ENCODE measurements at regions of chr5 and their contacts with region 1.

Region 1: GRCh38 chr5:91101600-91102379 is 281.3 kb downstream of the ARRDC3 start:
- DNase-seq: peak; percentile 33
- H3K4me3 Mint-ChIP-seq: no peak overlapping the region
- H3K27ac Mint-ChIP-seq: no peak overlapping the region
- H3K4me1 Mint-ChIP-seq: peaks cover 2% of the 10 kb centered on the region
- H3K27me3 Mint-ChIP-seq: peaks cover 9% of the 10 kb centered on the region

Region 2: DNA sequence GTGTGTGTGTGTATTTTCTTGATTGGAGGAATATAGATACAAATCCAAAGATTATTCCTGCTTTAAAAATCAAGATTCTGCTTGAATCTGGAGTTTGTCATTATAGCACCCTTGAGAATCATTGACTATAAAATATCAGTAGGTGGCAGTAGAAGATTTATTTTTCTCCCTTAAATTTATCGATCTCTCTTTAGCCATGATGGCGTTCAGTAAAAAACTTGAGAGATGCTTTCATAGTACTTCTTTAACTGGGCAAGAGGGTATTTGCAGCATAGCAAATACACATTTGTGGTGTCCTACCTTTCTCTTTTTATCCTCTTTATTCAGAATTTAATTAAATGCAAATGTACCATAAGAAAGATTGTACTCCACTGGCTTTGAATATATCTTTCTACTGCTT is 235.5 kb before region 1 on chr5:
- intact Hi-C with region 1: loop called (anchors 2 kb)
- DNase-seq: no peak
- H3K4me3 Mint-ChIP-seq: no peak overlapping the region
- H3K27ac Mint-ChIP-seq: no peak overlapping the region
- H3K4me1 Mint-ChIP-seq: peaks cover 9% of the 10 kb centered on the region
- H3K27me3 Mint-ChIP-seq: peaks cover 15% of the 10 kb centered on the region

Region 3: GRCh38 chr5:90968319-90968718 is 133.5 kb before region 1 on chr5:
- intact Hi-C with region 1: no loop called
- DNase-seq: no peak
- H3K4me3 Mint-ChIP-seq: no peak overlapping the region
- H3K27ac Mint-ChIP-seq: peak overlapping the region; percentile 63
- H3K4me1 Mint-ChIP-seq: peaks cover 33% of the 10 kb centered on the region
- H3K27me3 Mint-ChIP-seq: no peaks in the 10 kb centered on the region

Region 4: GRCh38 chr5:91126448-91126847 is 24.7 kb after region 1 on chr5:
- intact Hi-C with region 1: no loop called
- DNase-seq: no peak
- H3K4me3 Mint-ChIP-seq: no peak overlapping the region
- H3K27ac Mint-ChIP-seq: no peak overlapping the region
- H3K4me1 Mint-ChIP-seq: peaks cover 4% of the 10 kb centered on the region
- H3K27me3 Mint-ChIP-seq: peaks cover 12% of the 10 kb centered on the region

Measured in activated T-helper 2 cell treated with anti-CD3 and anti-CD28 coated beads, Interferon-gamma antibody, Interleukin-2, Interleukin-4, amounts not matched to agents 10 μg/mL and 5 μg/mL and 100 μg/mL, durations not matched to agents 14 hours and 24 hours and 36 hours (primary cell).